ENCODE measurements at regions of chr1 and their contacts with region 1.

Region 1: GRCh38 chr1:24481101-24481500 is 21.5 kb upstream of the RCAN3 start:
- DNase-seq: peak; percentile 83
- H3K4me3 Mint-ChIP-seq: peak overlapping the region; percentile 58
- H3K27ac Mint-ChIP-seq: peak overlapping the region; percentile 97
- H3K4me1 Mint-ChIP-seq: peaks cover 60% of the 10 kb centered on the region
- H3K27me3 Mint-ChIP-seq: no peaks in the 10 kb centered on the region

Region 2: DNA sequence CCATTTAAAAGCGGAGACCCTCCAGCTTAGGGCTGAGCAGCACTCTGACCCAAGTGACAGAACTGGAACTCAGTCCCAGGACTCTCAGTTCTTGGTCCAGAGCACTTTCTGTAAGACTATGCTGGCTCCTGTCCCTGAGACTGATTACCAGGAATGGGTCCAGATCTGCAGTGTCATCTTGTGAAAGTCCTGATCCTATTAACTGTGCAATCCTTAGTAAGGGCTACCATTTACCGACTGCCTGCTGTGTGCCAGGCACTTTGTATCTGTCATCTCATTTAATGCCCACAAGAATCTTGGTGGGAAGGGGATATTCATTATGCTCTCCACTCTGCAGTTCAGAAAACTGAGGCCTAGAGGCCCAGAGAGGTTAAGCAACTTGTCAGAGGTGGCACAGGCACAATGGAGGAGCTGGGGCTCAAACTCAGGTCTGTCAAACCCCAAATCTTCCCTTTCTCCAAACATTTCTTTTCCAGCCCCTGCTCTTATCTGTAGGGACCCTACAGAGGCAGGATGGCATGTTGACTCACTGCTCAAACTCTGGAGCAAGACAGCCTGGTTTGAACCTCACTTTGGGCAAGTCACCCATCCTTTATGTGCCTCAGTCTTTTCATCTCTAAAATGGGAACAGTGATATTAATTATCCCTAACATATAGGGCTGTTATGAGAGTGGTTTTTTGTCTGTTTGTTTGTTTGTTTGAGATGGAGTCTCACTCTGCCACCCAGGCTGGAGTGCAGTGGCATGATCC is 236.4 kb before region 1 on chr1:
- CTCF ChIA-PET with region 1: no interaction called
- POLR2A ChIA-PET with region 1: no interaction called
- intact Hi-C with region 1: no loop called
- DNase-seq: no peak
- H3K4me3 Mint-ChIP-seq: no peak overlapping the region
- H3K27ac Mint-ChIP-seq: no peak overlapping the region
- H3K4me1 Mint-ChIP-seq: no peaks in the 10 kb centered on the region
- H3K27me3 Mint-ChIP-seq: no peaks in the 10 kb centered on the region

Region 3: GRCh38 chr1:24536391-24536840 is 55.3 kb after region 1 on chr1:
- CTCF ChIA-PET with region 1: interaction called, 4 read pairs
- POLR2A ChIA-PET with region 1: interaction called, 6 read pairs
- intact Hi-C with region 1: loop called (anchors 2 kb)
- DNase-seq: peak; percentile 81
- H3K4me3 Mint-ChIP-seq: peak overlapping the region; percentile 76
- H3K27ac Mint-ChIP-seq: peak overlapping the region; percentile 99
- H3K4me1 Mint-ChIP-seq: peaks cover 83% of the 10 kb centered on the region
- H3K27me3 Mint-ChIP-seq: no peaks in the 10 kb centered on the region

Region 4: GRCh38 chr1:24744911-24745710 is 264.0 kb after region 1 on chr1 and contains the start of gene CLIC4:
- CTCF ChIA-PET with region 1: no interaction called
- POLR2A ChIA-PET with region 1: no interaction called
- intact Hi-C with region 1: loop called (anchors 5 kb)
- DNase-seq: peak; percentile 100
- H3K4me3 Mint-ChIP-seq: peak within 1 kb of the TSS; percentile 76
- H3K27ac Mint-ChIP-seq: peak within 1 kb of the TSS; percentile 58
- H3K4me1 Mint-ChIP-seq: peaks cover 34% of the 10 kb centered on the region
- H3K27me3 Mint-ChIP-seq: no peaks in the 10 kb centered on the region
- total RNA-seq, gene CLIC4: 25.5 to 26.3 TPM